Activated CD8-positive, alpha-beta T cell treated with anti-CD3 and anti-CD28 coated beads, Interleukin-2, amount 10 ng/mL, durations not matched to agents 7 days and 5 days (primary cell): ENCODE measurements at regions of chr6 and their contacts with region 1.

Region 1: DNA sequence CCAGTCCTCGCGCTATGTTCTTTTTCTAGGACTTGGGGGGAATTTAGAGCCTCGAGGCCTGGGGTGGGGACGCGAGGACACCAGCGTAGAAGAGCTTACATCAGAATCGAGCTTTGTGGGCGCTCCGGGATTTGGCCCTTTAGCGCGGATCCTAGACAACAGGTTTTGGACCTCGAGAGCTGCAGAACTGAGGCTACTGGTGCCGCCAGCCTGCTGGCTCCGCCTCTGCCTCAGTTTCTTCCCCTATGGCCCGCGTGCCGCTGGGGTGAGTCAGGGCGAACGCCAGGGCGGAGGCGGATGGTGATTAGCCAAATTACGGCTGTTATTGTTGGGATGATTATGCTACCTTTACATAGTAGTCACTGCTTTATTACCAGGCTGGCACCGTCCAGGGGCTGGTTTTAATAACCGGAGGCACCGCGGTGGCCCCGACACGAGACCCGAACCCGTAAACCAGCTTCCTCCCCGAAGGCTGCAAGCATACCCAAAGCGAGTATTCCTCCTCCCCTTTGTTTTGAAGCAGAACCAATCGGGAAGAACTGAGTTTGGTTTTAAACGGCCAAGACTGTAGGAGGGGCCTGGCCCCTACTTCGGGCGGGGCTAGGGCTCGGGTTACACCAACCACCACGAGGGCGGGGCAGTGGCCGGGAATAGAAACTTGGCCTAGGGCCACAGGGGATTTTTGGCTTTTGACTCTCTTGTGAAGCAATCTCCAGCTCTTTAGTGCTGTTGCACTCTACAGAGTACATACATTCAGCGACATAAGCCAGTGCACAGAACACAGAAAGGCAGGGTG is 639 bp upstream of the GTPBP2 start:
- DNase-seq: peak; percentile 95
- ATAC-seq: peak; percentile 75
- H3K4me3 Mint-ChIP-seq: peak overlapping the region; percentile 99
- H3K27ac Mint-ChIP-seq: peak overlapping the region; percentile 100
- H3K4me1 Mint-ChIP-seq: peaks cover 49% of the 10 kb centered on the region
- H3K27me3 Mint-ChIP-seq: no peaks in the 10 kb centered on the region

Region 2: DNA sequence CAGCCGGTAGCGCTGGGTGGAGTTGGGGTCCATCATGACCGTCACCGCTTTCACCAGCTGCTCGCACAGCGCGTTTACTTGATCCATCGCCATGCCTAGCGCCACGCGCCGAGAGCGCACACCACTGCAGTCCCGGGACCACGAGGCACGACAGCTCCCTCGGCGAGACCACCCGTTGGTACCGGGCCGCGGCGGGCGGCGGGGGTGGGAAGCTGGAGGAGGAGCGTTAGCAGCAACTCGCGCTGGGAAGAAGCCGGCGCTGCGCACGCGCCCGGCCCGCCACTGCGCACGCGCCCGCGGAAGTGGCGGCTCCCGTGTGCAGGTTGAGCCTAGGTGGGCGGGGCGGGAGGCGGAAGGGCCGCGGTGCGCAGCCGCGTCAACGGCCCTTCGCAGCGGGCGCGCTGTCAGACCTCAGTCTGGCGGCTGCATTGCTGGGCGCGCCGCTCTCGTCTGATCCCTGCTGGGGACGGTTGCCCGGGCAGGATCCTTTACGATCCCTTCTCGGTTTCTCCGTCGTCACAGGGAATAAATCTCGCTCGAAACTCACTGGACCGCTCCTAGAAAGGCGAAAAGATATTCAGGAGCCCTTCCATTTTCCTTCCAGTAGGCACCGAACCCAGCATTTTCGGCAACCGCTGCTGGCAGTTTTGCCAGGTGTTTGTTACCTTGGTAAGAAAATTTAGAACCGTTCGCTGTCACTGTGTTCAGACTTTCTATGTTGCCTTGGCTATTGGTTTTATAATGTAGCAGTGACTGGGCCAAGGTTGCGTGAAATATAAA is 53.7 kb before region 1 on chr6 and contains the starts of genes POLH and XPO5:
- CTCF ChIA-PET with region 1: no interaction called
- POLR2A ChIA-PET with region 1: interaction called, 15 read pairs
- DNase-seq: peak; percentile 93
- ATAC-seq: peak; percentile 96
- H3K4me3 Mint-ChIP-seq: peak within 1 kb of the TSS; percentile 97
- H3K27ac Mint-ChIP-seq: peak within 1 kb of the TSS; percentile 89
- H3K4me1 Mint-ChIP-seq: peaks cover 44% of the 10 kb centered on the region
- H3K27me3 Mint-ChIP-seq: no peaks in the 10 kb centered on the region
- total RNA-seq, gene POLH: 73.1 to 75.2 TPM
- total RNA-seq, gene XPO5: 57.6 to 62.1 TPM

Region 3: DNA sequence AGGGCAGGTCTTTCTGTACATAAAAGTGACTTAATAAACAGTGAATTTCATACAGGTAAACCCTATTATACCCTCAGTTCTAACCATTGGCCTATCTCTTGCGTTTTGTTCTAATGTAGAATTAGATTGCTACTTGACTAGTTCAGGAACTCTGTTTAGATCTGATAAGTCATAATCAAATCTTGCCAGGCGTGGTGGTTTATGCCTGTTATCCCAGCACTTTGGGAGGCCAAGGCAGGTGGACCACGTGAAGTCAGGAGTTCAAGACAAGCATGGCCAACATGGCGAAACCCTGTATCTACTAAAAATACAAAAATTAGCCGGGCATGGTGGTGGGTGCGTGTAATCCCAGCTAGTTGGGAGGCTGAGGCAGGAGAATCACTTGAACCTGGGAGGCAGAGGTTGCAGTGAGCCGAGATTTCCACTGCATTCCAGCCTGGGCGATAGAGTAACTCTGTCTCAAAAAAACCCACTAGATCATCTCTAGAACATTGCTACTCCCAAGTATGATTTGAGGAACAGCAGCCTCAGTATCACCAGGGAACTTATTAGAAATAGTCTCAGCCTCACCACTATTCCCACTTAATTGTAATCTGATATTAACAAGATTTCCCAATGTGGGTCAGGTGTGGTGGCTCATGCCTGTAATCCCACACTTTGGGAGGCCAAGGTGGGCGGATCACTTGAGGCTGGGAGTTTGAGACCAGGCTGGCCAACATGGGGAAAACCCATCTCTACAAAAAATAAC is 12.8 kb before region 1 on chr6:
- CTCF ChIA-PET with region 1: interaction called, 7 read pairs
- POLR2A ChIA-PET with region 1: interaction called, 11 read pairs
- DNase-seq: no peak
- ATAC-seq: no peak
- H3K4me3 Mint-ChIP-seq: no peak overlapping the region
- H3K27ac Mint-ChIP-seq: no peak overlapping the region
- H3K4me1 Mint-ChIP-seq: no peaks in the 10 kb centered on the region
- H3K27me3 Mint-ChIP-seq: no peaks in the 10 kb centered on the region

Region 4: GRCh38 chr6:43644931-43645612 is 15.4 kb after region 1 on chr6 and contains the start of gene RSPH9:
- CTCF ChIA-PET with region 1: no interaction called
- POLR2A ChIA-PET with region 1: interaction called, 19 read pairs
- DNase-seq: peak; percentile 72
- ATAC-seq: peak; percentile 88
- H3K4me3 Mint-ChIP-seq: peak within 1 kb of the TSS; percentile 60
- H3K27ac Mint-ChIP-seq: no peak within 1 kb of the TSS
- H3K4me1 Mint-ChIP-seq: peaks cover 24% of the 10 kb centered on the region
- H3K27me3 Mint-ChIP-seq: no peaks in the 10 kb centered on the region
- total RNA-seq, gene RSPH9: not detected

Region 5: DNA sequence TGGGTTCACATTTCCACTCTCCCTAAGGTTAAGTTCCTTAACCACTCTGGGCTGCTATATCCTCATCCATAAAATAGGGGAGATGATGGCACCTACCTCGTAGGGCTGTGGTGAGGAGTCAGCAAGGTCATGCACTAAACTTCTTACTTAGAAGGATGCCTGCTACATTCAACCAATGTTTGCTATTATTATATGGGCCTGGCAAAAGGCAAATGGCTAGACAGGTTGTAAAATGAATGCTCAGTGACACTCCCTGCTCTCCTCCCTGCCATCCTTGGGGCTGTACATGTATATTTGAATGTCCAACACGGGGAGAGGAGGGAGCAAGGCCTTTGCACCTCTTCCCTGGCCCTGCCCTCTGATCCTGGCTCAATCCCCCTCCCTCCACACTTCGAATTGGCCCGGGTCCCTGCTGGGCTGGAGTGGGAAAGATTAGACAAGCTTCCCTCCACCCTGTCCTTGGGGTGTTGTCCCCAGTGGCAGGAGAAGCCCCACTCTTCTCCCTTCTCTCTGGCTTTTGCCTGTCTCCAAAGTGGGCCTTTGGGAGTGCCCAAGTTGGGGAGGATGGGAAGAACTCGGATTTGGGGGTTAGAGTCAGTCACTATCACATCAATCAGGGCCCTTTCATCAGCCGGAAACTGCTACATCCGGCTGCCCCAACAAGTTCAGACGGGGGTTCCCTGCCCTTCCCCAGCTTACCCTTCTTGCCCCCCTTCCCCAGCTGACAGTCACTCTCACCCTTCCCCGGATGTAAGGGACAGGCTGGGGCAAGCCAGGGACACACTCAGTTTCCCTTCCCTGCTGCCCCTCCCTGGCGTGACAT is 104.0 kb after region 1 on chr6:
- CTCF ChIA-PET with region 1: no interaction called
- POLR2A ChIA-PET with region 1: no interaction called
- DNase-seq: peak; percentile 54
- ATAC-seq: peak; percentile 61
- H3K4me3 Mint-ChIP-seq: no peak overlapping the region
- H3K27ac Mint-ChIP-seq: peak overlapping the region; percentile 64
- H3K4me1 Mint-ChIP-seq: peaks cover 21% of the 10 kb centered on the region
- H3K27me3 Mint-ChIP-seq: peaks cover 2% of the 10 kb centered on the region